ENCODE measurements at regions of chr19 and their contacts with region 1.

Region 1: DNA sequence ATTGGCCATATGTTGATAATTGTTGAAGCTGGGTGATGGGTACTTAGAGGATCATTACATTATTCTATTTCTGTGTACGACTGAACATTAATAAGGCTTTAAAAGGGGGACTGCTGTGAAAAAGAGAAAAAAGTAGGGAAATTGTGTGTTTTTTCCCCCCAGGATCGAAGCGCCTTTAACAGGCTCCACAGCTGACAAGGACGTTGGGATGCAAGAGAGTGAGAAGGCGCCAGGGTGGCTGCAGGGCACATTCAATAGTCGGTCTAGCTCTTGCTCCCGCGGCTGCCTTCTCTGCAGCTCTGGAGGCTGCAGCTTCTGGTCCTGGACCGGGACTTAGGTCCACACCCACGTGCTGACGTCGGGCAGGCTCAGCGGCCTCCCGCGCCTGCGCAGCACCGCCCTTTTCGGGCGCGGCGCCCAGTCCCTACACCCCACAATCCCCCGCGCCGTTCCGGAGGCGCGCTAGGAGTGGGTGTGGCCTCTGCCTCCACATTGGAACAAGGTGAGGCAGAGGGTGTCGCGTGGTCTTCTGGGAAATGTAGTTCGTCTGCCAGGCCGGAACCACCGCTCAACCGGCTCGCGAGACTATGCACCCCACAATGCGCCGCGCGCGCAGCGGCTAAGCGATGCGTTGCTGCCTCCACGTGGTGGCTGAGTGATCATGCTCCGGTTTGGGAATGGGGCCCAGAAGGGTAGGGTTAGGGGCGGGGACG is 4.9 kb upstream of the LRFN3 start:
- DNase-seq: peak; percentile 97 to 100 (median 99)
- ATAC-seq: peak; percentile 98
- H3K4me3 ChIP-seq: peak overlapping the region; percentile 43 to 56
- H3K4me3 Mint-ChIP-seq: peak overlapping the region; percentile 48
- H3K27ac ChIP-seq: peak overlapping the region; percentile 64 to 84
- H3K27ac Mint-ChIP-seq: peak overlapping the region; percentile 89
- H3K4me1 ChIP-seq: peaks cover 43% of the 10 kb centered on the region
- H3K4me1 Mint-ChIP-seq: peaks cover 47% of the 10 kb centered on the region
- H3K27me3 ChIP-seq: no peaks in the 10 kb centered on the region
- H3K27me3 Mint-ChIP-seq: no peaks in the 10 kb centered on the region
- CTCF ChIP-seq: peak; percentile 85

Region 2: DNA sequence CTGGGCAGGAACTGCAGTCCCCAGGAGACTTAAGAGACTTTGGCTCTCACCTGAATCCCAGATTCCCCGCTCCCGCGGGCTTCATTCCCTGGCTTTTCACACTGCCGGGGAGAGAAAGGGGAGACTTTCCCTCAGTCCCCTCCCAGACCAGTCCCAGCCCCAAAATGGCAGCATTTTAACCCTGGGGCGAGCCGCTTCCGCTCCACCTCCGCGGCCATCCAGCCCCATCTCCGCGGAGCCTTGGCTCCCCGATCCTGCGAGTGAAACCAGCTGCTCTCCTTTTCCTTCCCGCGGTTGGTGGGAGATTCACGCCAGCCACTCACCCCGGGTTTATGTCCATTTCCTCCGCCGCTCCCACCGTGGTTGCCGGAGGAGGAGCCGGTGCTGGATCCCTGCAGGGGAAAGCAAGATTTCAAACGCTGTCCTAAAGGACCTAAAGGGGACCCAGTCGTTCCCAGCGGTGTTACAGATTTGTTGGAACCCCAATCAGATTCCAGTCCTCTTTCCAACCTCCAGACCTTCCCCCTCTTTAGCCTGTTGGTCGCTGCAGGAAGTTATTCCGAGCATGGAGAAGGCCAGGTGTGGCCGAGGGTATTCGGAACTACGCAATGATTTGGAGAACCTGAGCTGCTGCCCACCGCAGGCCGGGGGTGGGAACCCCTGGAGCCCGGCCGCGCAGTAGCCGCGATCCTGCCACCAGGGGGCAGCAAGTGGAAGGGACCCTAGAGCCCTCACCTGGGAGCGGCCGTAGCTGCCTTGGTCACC is 421.3 kb before region 1 on chr19:
- CTCF ChIA-PET with region 1: interaction called, 5 read pairs
- POLR2A ChIA-PET with region 1: no interaction called
- intact Hi-C with region 1: loop called in 1 of 2 experiments (anchors 5 kb)
- DNase-seq: peak; percentile 56 to 84 (median 77)
- ATAC-seq: peak; percentile 75
- H3K4me3 ChIP-seq: peak overlapping the region; percentile 49 to 59
- H3K4me3 Mint-ChIP-seq: peak overlapping the region; percentile 70
- H3K27ac ChIP-seq: peak overlapping the region in 1 of 2 experiments; percentile 53
- H3K27ac Mint-ChIP-seq: no peak overlapping the region
- H3K4me1 ChIP-seq: peaks cover 18% of the 10 kb centered on the region
- H3K4me1 Mint-ChIP-seq: peaks cover 17% of the 10 kb centered on the region
- H3K27me3 ChIP-seq: peaks cover 0 to 7% of the 10 kb centered on the region in 2 experiments
- H3K27me3 Mint-ChIP-seq: peaks cover 44% of the 10 kb centered on the region
- CTCF ChIP-seq: peak; percentile 80

Region 3: DNA sequence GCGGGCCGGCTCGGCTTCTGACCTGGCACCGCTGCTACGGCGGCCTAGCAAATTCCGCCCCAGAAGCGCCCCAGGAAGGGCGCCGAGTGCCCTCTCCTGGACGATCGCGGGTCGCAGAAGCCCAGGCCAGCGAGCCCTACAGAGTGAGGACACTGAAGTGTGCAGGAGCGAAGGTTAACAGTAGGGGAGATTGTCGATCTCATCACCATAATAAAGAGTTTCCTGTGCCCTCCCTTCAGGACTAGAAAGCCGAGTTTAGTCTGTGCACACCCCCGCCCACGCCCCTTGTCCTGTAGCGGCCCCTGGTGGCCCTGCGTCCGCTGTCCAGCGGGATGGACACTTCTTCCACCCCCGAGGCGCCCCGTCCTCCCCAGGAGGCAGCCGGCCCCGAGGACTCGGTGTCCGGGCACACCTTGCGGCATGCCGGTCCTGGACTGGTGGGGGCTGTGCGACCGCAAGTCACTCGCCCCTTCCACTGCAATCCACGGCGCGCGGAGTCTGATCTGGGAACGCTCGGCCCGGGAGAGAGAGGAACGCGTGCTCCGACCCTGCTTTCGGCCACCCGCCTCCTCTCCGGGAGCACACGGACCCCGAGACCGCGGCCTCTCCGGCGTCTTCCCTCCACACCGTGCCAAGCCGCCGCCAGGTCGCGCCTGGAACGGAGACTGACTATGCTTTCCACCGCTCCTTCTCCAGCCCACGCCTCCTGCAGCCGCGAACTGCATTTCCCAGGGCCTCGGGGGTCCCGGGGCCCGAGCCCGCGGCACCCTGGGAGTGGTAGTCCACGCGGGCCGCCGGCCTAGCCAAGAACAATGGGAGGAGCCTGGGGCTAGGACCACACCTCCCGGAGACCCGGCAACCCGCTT is 214.3 kb before region 1 on chr19:
- CTCF ChIA-PET with region 1: no interaction called
- POLR2A ChIA-PET with region 1: no interaction called
- intact Hi-C with region 1: loop called (anchors 1 kb)
- DNase-seq: peak; percentile 92 to 99 (median 96)
- ATAC-seq: peak; percentile 82
- H3K4me3 ChIP-seq: peak overlapping the region; percentile 77 to 84
- H3K4me3 Mint-ChIP-seq: peak overlapping the region; percentile 96
- H3K27ac ChIP-seq: peak overlapping the region; percentile 44 to 83
- H3K27ac Mint-ChIP-seq: peak overlapping the region; percentile 97
- H3K4me1 ChIP-seq: peaks cover 59% of the 10 kb centered on the region
- H3K4me1 Mint-ChIP-seq: peaks cover 62% of the 10 kb centered on the region
- H3K27me3 ChIP-seq: no peaks in the 10 kb centered on the region
- H3K27me3 Mint-ChIP-seq: no peaks in the 10 kb centered on the region
- CTCF ChIP-seq: peak; percentile 99

Region 4: GRCh38 chr19:35757749-35758608 is 173.3 kb before region 1 on chr19 and contains the start of gene PROSER3:
- CTCF ChIA-PET with region 1: no interaction called
- POLR2A ChIA-PET with region 1: no interaction called
- intact Hi-C with region 1: loop called in 1 of 2 experiments (anchors 1 kb)
- DNase-seq: peak; percentile 96 to 99 (median 98)
- ATAC-seq: peak; percentile 95
- H3K4me3 ChIP-seq: peak within 1 kb of the TSS; percentile 98 to 100
- H3K4me3 Mint-ChIP-seq: peak within 1 kb of the TSS; percentile 96
- H3K27ac ChIP-seq: peak within 1 kb of the TSS; percentile 95 to 97
- H3K27ac Mint-ChIP-seq: peak within 1 kb of the TSS; percentile 97
- H3K4me1 ChIP-seq: peaks cover 25% of the 10 kb centered on the region
- H3K4me1 Mint-ChIP-seq: peaks cover 34% of the 10 kb centered on the region
- H3K27me3 ChIP-seq: no peaks in the 10 kb centered on the region
- H3K27me3 Mint-ChIP-seq: peaks cover 9% of the 10 kb centered on the region
- CTCF ChIP-seq: no peak
- total RNA-seq, gene PROSER3: 17.3 to 19.5 TPM

Region 5: DNA sequence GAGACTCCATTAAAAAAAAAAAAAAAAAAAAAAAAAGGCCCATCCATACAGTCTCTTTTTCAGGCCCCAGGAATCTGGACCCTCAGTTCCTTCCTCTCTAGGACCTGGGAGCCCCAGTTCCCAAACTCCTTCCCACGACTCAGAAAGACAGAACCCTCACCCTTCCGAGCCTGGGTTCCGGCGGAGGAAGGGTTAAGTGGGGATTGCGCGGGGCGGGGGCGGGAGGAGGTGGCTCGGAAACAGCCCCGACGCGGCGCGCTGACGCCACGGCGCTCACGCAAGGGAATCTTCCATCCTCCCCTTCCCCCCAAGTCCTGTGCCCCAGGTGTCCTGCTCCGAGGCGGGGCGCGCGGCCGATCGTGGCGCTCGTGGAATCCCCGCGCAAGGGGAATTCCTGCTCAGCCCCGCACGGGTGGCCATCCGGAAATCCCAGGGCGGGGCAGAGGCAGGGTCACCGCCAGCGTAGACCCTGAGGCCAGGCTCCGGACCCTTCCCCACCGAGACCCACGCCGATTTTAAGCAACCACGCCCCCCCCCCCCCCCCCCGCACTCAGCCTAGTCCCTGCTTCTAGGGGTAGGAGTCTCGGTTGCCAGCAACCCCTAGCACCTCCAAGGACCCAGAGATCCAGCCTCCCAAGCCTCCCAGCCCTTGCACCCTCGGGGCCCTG is 31.6 kb before region 1 on chr19:
- CTCF ChIA-PET with region 1: interaction called, 8 read pairs
- POLR2A ChIA-PET with region 1: interaction called, 8 read pairs
- intact Hi-C with region 1: loop called (anchors 1 kb)
- DNase-seq: peak; percentile 68 to 97 (median 87)
- ATAC-seq: peak; percentile 59
- H3K4me3 ChIP-seq: peak overlapping the region; percentile 95 to 97
- H3K4me3 Mint-ChIP-seq: peak overlapping the region; percentile 100
- H3K27ac ChIP-seq: peak overlapping the region; percentile 85 to 99
- H3K27ac Mint-ChIP-seq: peak overlapping the region; percentile 95
- H3K4me1 ChIP-seq: peaks cover 45% of the 10 kb centered on the region
- H3K4me1 Mint-ChIP-seq: peaks cover 57% of the 10 kb centered on the region
- H3K27me3 ChIP-seq: no peaks in the 10 kb centered on the region
- H3K27me3 Mint-ChIP-seq: no peaks in the 10 kb centered on the region
- CTCF ChIP-seq: no peak

Region 6: DNA sequence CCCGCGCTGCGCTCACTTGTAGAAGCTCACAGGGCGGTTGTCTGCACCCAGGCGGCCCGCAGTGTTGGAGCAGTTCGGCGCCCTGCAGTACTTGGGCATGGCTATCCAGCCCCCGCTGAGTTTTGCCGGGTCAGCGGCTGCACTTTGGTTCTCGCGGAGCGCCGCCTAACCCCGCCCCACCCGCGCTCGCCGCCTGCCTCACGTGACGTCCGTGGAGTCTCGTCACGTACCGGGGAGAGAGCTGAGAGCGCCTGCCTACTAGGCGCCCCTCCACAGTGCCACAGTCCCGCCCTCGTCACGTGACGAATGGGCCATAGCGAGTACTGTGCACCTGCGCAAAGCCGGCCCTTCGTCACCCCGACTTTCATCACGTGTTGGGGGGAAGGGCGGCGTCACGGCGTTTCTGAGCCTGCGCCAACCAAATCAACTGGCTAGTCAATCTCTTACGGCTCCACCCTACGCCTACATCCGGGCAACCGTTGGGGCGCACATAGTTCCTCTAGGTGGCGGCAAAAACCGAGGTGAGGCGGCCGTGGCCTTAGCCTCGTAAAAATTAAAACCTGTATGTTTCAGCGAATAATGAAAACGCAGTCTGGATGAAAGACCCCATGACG is 122.9 kb after region 1 on chr19 and contains the start of gene THAP8:
- CTCF ChIA-PET with region 1: no interaction called
- POLR2A ChIA-PET with region 1: no interaction called
- intact Hi-C with region 1: loop called in 1 of 2 experiments (anchors 1 kb)
- DNase-seq: peak; percentile 99 to 100 (median 100)
- ATAC-seq: peak; percentile 86
- H3K4me3 ChIP-seq: peak within 1 kb of the TSS; percentile 74 to 86
- H3K4me3 Mint-ChIP-seq: peak within 1 kb of the TSS; percentile 96
- H3K27ac ChIP-seq: peak within 1 kb of the TSS; percentile 95 to 96
- H3K27ac Mint-ChIP-seq: peak within 1 kb of the TSS; percentile 97
- H3K4me1 ChIP-seq: peaks cover 17% of the 10 kb centered on the region
- H3K4me1 Mint-ChIP-seq: peaks cover 27% of the 10 kb centered on the region
- H3K27me3 ChIP-seq: no peaks in the 10 kb centered on the region
- H3K27me3 Mint-ChIP-seq: no peaks in the 10 kb centered on the region
- CTCF ChIP-seq: peak; percentile 66
- total RNA-seq, gene THAP8: 0.31 to 0.57 TPM

Region 7: GRCh38 chr19:36796076-36796992 is 865.0 kb after region 1 on chr19:
- CTCF ChIA-PET with region 1: no interaction called
- POLR2A ChIA-PET with region 1: no interaction called
- intact Hi-C with region 1: no loop called
- DNase-seq: no peak
- ATAC-seq: no peak
- H3K4me3 ChIP-seq: peak overlapping the region; percentile 92 to 97
- H3K4me3 Mint-ChIP-seq: peak overlapping the region; percentile 97
- H3K27ac ChIP-seq: peak overlapping the region; percentile 76 to 90
- H3K27ac Mint-ChIP-seq: peak overlapping the region; percentile 98
- H3K4me1 ChIP-seq: peaks cover 3% of the 10 kb centered on the region
- H3K4me1 Mint-ChIP-seq: peaks cover 21% of the 10 kb centered on the region
- H3K27me3 ChIP-seq: no peaks in the 10 kb centered on the region
- H3K27me3 Mint-ChIP-seq: peaks cover 6% of the 10 kb centered on the region
- CTCF ChIP-seq: no peak